GM10248 (cell line): ENCODE measurements at regions of chr10 and their contacts with region 1.

Region 1: DNA sequence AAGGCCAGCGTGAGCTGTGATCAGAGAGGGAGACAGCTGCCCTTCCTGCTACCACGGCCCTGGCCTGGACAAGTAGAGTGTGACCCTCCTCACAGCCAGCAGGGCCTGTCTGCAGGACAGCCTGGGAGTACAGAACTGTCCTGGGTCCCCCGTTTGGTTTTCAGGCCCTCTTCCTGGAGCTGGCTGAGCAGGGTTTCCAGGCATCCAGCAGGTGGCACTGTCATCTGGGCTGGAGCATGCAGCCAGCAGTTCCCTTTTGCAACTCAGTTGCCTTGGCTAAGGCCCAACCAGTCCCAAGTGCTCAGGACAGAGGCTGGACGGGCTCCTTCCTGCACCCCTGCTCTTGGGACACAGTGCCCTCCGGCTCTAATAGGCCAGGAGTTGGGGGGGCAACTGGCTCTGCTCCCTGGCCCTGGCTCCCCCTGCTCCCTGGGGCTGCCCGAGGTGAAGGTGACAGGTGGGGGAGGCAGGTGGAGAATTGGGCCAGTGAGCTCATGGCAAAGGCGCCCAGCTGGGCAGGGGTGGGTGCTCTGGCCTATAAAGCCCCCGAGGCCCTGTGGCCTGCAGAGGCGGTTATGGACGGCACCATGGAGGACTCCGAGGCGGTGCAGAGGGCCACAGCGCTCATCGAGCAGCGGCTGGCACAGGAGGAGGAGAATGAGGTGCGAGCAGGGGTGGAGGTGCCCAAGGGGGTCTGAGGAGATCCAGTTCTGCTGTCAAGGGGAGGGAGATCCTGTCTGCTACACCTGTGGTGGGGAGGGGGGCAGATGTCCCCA is at the start of gene ANKRD2:
- DNase-seq: peak; percentile 83
- CTCF ChIP-seq: peak; percentile 82

Region 2: GRCh38 chr10:97400665-97401454 is 171.5 kb before region 1 on chr10 and contains the start of gene RRP12:
- CTCF ChIA-PET with region 1: no interaction called
- POLR2A ChIA-PET with region 1: no interaction called
- DNase-seq: peak; percentile 97
- CTCF ChIP-seq: no peak

Region 3: GRCh38 chr10:97553575-97554031 is 18.8 kb before region 1 on chr10:
- CTCF ChIA-PET with region 1: interaction called, 10 read pairs
- POLR2A ChIA-PET with region 1: no interaction called
- DNase-seq: peak; percentile 65
- CTCF ChIP-seq: peak; percentile 78

Region 4: GRCh38 chr10:97584060-97584797 is 11.8 kb after region 1 on chr10 and contains the start of gene HOGA1:
- CTCF ChIA-PET with region 1: interaction called, 55 read pairs
- POLR2A ChIA-PET with region 1: no interaction called
- DNase-seq: no peak
- CTCF ChIP-seq: no peak

Region 5: GRCh38 chr10:97590082-97590747 is 17.8 kb after region 1 on chr10:
- CTCF ChIA-PET with region 1: interaction called, 55 read pairs
- POLR2A ChIA-PET with region 1: no interaction called
- DNase-seq: no peak
- CTCF ChIP-seq: no peak

Region 6: DNA sequence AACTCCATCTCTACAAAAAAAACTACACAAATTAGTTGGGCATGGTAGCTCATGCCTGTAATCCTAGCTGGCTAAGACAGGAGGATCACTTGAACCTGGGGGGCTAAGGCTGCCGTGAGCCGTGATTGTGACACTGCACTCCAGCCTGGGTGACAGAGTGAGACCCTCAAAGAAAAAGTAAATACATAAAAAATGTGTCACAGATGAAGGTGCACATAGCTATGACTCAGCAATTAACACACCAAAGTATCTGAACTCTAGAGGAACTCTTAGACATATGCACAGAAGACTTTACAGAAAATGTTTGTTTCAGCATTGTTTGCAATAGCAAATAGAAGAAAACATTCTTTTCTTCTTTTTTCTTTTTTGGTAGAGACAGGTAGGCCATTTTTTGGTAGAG is 25.4 kb after region 1 on chr10:
- CTCF ChIA-PET with region 1: interaction called, 10 read pairs
- POLR2A ChIA-PET with region 1: no interaction called
- DNase-seq: no peak
- CTCF ChIP-seq: no peak

Region 7: DNA sequence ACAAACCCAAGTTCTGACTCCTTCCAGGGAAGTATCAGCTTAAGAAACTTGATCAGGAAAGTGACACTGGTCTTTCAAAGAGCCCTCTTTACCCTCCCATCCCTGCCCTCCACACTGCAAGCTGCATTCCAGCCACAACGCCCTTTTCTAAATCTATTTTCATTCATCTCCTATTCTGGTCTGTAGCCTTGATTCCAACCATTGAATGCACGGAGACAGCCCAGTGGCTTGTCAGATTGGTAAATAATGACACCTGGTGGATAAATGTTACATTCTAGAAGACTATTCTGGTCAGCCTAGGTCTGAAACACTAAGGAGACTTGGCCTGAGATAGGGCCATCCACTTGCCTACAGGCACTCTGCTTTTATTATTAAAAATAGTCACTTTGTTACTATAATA is 40.0 kb after region 1 on chr10:
- CTCF ChIA-PET with region 1: interaction called, 14 read pairs
- POLR2A ChIA-PET with region 1: no interaction called
- DNase-seq: no peak
- CTCF ChIP-seq: peak; percentile 27

Region 8: GRCh38 chr10:97659589-97659988 is 87.2 kb after region 1 on chr10:
- CTCF ChIA-PET with region 1: no interaction called
- POLR2A ChIA-PET with region 1: no interaction called
- DNase-seq: no peak
- CTCF ChIP-seq: no peak

Region 9: GRCh38 chr10:97736902-97737769 is 164.7 kb after region 1 on chr10 and contains the start of gene ZFYVE27:
- CTCF ChIA-PET with region 1: interaction called, 11 read pairs
- POLR2A ChIA-PET with region 1: no interaction called
- DNase-seq: peak; percentile 99
- CTCF ChIP-seq: no peak

Region 10: DNA sequence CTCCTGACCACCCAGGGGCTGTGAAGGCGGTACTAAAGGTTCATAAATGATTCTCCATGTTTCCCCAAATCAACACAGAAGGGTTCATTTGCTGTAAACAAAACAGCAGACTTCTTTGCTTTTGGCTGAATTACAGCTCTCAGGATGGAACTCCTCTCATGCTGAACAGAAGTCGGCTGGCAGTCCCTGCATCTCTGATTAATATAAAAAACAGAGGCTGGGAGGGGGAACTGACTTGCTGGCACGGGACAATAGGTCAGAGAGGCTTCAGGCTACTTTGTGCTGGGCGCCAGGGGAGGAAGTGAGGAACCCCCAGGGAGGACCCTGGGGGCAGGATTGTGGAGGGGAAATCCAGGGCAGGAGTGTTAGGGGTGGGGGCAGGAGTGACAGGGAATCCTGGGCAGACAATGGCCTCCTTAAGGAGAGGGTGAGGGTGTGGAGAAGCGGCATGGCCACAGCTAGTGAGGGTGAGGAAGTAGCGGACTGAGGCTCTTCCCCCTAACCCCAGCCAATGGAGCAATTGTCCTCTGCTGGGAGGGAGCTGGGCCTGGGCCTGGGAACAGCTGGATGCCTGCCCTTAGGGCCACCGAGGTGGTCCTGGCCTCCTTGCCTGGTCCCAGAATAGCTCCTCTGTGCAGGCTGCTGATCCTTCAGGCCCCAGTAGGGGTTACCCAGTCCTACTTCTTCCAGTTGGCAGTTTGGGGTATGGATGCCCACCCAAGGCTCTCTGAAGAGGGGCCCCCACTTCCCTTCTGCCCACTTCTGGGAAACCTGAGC is 208.6 kb after region 1 on chr10:
- CTCF ChIA-PET with region 1: no interaction called
- POLR2A ChIA-PET with region 1: no interaction called
- DNase-seq: no peak
- CTCF ChIP-seq: no peak